Panc1 (cell line): ENCODE measurements at regions of chr15 and their contacts with region 1.

Region 1: GRCh38 chr15:47196057-47196456 is 521.2 kb upstream of the SEMA6D start:
- DNase-seq: peak; percentile 53
- ATAC-seq: peak; percentile 96
- H3K4me3 ChIP-seq: no peak overlapping the region
- H3K27ac ChIP-seq: no peak overlapping the region
- H3K4me1 ChIP-seq: no peaks in the 10 kb centered on the region
- H3K27me3 ChIP-seq: no peaks in the 10 kb centered on the region
- CTCF ChIP-seq: peak; percentile 84

Region 2: GRCh38 chr15:47773163-47773562 is 577.1 kb after region 1 on chr15:
- CTCF ChIA-PET with region 1: no interaction called
- POLR2A ChIA-PET with region 1: no interaction called
- in situ Hi-C with region 1: no loop called
- intact Hi-C with region 1: loop called (anchors 10 kb)
- DNase-seq: no peak
- ATAC-seq: no peak
- H3K4me3 ChIP-seq: no peak overlapping the region
- H3K27ac ChIP-seq: no peak overlapping the region
- H3K4me1 ChIP-seq: no peaks in the 10 kb centered on the region
- H3K27me3 ChIP-seq: no peaks in the 10 kb centered on the region
- CTCF ChIP-seq: no peak

Region 3: GRCh38 chr15:47987908-47988532 is 792.0 kb after region 1 on chr15:
- CTCF ChIA-PET with region 1: interaction called, 29 read pairs
- POLR2A ChIA-PET with region 1: no interaction called
- in situ Hi-C with region 1: no loop called
- intact Hi-C with region 1: loop called (anchors 1 kb)
- DNase-seq: peak; percentile 8
- ATAC-seq: peak; percentile 89
- H3K4me3 ChIP-seq: no peak overlapping the region
- H3K27ac ChIP-seq: no peak overlapping the region
- H3K4me1 ChIP-seq: no peaks in the 10 kb centered on the region
- H3K27me3 ChIP-seq: no peaks in the 10 kb centered on the region
- CTCF ChIP-seq: peak; percentile 77

Region 4: DNA sequence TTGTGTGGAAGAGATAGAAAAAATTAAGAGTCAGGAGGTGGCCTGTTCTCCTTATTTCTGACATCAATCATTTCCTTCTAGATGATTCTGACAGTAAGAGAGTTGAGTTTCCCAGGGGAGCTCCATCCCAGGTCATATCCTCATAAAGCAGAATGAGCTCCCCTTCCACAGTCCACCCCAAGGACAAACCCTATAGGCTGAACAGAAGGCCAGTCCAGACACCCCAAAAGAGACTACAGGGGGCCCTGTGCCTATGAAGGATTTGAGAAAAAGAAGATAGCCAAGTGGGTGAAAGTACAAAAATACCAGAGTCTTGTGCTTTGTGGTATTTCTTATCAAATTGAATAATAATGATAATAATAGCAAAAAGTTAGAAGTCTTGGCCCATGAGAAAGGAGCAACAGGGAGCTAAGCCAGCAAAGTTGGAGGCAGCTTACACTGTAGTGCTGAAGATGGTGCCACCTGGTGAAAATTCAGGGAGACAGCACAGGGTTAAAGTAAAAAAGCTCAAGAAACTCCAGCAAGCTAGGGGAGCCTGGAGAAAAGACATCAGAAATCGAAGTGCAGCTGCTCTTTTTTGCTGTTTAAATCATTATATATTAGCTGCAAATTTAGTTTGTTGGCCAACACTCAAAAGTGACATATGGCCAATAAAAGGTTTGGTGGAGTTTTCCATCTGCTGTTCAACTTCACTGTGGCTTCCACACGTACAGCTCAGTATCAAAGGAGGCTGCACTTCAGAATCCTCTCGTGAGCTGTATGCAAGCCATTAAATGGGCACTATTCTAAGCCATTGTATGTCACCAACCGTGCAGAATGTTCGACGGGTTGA is 888.9 kb after region 1 on chr15:
- CTCF ChIA-PET with region 1: interaction called, 16 read pairs
- POLR2A ChIA-PET with region 1: no interaction called
- in situ Hi-C with region 1: no loop called
- intact Hi-C with region 1: no loop called
- DNase-seq: peak; percentile 8
- ATAC-seq: no peak; the same call in 1 of the 2 replicates
- H3K4me3 ChIP-seq: no peak overlapping the region
- H3K27ac ChIP-seq: no peak overlapping the region
- H3K4me1 ChIP-seq: no peaks in the 10 kb centered on the region
- H3K27me3 ChIP-seq: no peaks in the 10 kb centered on the region
- CTCF ChIP-seq: peak; percentile 62

Region 5: DNA sequence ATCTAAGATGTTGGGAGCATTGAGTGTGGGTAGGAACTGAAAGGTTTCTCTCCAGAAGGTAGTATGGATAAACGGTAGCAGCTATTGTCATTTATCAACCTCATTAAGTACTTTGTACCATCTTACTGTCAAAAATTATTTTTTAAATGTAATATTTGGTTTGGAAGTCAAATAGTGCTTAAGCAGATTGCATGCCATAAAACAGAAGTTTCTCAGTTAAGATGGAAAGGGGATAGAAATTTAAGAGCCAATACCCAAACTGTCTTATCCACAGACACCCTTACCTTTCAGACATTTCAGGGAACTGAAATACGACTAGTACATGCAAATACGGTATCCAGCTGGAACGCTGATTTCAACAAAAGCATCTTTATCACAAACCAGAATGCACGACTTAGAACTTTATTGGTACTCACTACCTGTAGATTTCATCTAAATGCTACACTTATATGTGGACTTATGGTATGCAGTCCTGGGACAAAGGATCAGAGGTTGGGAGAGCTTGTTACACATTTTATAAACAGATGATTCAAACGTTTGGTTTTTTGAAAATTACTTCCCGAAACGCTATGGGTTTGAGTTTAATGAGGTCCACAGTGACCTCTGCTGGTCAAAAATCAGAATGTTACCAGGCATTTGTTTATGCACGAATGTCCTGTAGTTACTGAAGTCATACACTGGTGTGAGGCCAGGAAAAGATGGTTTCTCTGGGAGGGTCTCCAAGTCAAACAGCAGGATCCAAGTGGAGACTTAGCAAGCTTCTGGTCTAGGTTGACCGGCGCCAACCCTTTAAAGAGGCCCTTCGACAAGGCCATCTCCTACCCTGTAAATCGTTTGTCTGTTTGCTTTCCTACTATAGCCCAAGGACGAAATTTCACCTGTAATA is 1089.5 kb after region 1 on chr15:
- CTCF ChIA-PET with region 1: no interaction called
- POLR2A ChIA-PET with region 1: no interaction called
- in situ Hi-C with region 1: no loop called
- intact Hi-C with region 1: loop called (anchors 10 kb)
- DNase-seq: peak; percentile 66
- ATAC-seq: peak; percentile 89
- H3K4me3 ChIP-seq: peak overlapping the region in 1 of 2 experiments; percentile 10; a peak in 1 of 4 replicates
- H3K27ac ChIP-seq: no peak overlapping the region
- H3K4me1 ChIP-seq: peaks cover 4% of the 10 kb centered on the region; the same call in 1 of the 2 replicates
- H3K27me3 ChIP-seq: peaks cover 5% of the 10 kb centered on the region
- CTCF ChIP-seq: peak; percentile 79